ENCODE measurements at regions of chr5 and their contacts with region 1.

Region 1: DNA sequence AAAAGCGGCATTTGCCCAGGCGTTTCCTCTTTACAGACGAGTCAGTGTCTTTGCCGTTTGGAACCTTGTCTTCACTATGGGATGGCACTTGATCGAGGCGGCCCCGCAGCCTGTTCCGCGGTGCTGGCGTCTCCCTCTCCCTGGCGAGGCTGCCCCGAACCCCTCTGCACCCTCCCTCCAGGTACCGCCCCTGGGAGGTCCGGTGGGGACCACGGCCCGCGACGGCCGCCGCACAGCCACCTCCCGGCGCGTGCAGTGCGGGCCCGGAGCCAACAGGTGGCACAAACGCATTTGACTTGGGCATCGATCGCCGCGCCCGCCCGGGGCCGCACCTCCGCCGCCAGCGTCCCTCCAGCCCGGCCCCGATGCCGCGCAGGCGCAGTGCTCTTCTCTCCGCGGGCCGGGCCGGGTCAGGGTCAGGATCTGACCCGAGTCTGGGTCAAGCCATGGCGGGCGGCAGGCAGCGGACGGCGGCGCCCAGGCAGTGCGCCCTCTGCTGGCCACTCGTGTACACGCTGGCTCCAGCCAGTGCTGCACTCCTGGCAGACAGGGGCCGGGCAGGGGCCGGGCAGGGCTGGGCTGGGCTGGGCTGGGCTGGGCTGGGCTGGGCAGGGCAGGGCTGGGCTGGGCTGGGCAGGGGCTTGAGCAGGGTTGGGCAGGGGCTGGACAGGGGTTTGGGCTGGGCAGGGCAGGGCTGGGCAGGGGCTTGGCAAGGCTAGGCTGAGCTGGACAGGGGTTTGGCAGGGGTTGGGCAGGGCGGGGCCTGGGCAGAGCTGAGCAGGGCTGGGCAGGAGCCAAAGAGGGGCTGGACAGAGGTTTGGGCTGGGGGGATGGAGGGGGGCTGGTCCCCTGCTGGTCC is 155.8 kb upstream of the IRX4 start:
- DNase-seq: peak; percentile 88
- H3K4me3 Mint-ChIP-seq: peak overlapping the region; percentile 77
- H3K27ac Mint-ChIP-seq: no peak overlapping the region
- H3K4me1 Mint-ChIP-seq: no peaks in the 10 kb centered on the region
- H3K27me3 Mint-ChIP-seq: peaks cover 18% of the 10 kb centered on the region

Region 2: DNA sequence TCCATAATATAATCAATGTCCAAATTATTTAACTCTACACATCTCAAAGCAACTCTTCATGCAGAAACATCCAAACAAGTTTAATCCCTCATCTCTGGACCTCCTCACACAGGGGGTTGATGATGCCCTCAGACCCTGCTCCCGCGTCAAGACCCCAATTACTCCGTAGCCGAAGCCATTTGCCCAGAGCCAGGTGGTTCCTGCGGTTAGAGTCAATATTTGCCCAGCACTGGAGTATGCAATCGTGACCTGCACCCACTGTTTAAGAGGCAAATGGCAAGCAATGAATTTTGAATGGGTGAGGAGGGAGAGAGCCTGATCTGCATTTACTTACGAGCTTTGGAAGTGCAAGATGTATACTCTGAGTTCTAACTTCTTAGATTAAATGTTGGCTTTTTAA is 116.2 kb after region 1 on chr5:
- intact Hi-C with region 1: loop called (anchors 5 kb)
- DNase-seq: no peak
- H3K4me3 Mint-ChIP-seq: no peak overlapping the region
- H3K27ac Mint-ChIP-seq: no peak overlapping the region
- H3K4me1 Mint-ChIP-seq: no peaks in the 10 kb centered on the region
- H3K27me3 Mint-ChIP-seq: no peaks in the 10 kb centered on the region

Region 3: DNA sequence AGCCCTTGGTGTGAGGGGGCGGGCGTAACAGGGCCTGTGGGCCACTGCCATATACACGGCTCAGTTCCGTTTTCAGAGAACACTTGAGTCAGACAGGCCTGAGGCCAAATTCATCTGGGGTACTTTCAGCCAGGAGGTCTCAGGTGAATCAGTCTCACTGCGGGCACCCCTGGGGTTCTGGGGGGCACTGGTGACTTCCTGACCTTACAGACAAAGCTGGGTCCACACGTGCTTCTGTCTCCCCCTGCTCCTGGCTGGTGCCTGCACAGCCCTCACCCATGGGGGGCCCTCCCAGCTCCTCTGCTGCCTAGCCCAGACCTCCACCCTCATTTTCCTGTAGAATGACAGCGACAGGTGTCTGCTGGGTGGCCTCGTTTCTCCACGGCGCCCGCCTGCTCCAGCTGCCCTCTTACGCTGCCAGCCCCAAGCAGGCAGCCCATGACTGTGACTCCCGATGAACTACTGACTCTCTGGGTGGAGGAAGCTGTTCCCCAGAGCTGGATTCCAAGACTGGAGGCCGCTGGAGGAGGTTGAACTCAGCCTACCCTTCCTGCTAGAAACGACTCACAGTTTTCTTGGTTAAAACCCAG is 218.2 kb after region 1 on chr5:
- intact Hi-C with region 1: no loop called
- DNase-seq: no peak
- H3K4me3 Mint-ChIP-seq: no peak overlapping the region
- H3K27ac Mint-ChIP-seq: no peak overlapping the region
- H3K4me1 Mint-ChIP-seq: no peaks in the 10 kb centered on the region
- H3K27me3 Mint-ChIP-seq: no peaks in the 10 kb centered on the region